IMR-90 (cell line): ENCODE measurements at regions of chr5 and their contacts with region 1.

Region 1: DNA sequence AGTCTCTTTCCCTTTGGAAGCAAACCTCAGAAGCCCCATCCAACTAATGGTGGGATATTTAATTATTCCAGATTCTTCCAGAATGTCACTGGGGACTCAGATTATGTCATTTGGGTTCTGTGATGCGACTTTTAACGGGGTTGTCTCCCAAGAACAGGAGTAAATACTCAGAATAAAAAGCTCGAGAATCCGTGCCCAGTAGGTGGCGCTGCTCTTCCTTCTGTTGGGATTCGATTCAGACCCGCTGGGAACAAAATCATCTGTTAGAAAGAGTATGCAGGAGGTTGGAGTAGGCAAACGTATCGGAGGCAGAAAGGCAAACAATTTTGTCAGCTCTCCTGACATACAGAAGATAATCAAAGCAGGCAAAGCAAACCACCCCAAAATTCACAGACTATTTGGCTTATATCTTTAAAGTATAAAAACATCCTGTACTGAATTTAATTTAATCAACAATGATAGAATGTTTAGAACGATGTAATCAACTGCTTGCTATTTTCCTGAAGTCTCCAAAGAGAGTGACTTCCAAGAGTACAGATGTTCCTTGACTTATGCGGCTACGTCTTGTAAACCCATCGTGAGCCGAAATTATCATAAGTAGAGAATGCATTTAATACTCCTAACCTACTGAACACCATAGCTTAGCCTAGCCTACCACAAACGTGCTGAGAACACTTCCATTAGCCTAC is 169.8 kb upstream of the RAI14 start:
- DNase-seq: peak; percentile 88
- ATAC-seq: peak; percentile 54
- H3K4me3 ChIP-seq: no peak overlapping the region
- H3K27ac ChIP-seq: peak overlapping the region; percentile 70; the same call in 1 of the 2 replicates
- H3K4me1 ChIP-seq: peaks cover 31% of the 10 kb centered on the region
- H3K27me3 ChIP-seq: no peaks in the 10 kb centered on the region
- CTCF ChIP-seq: peak; percentile 90
- POLR2A ChIP-seq: peak; percentile 27; the same call in 1 of the 2 replicates
- RAD21 ChIP-seq: peak; percentile 93

Region 2: DNA sequence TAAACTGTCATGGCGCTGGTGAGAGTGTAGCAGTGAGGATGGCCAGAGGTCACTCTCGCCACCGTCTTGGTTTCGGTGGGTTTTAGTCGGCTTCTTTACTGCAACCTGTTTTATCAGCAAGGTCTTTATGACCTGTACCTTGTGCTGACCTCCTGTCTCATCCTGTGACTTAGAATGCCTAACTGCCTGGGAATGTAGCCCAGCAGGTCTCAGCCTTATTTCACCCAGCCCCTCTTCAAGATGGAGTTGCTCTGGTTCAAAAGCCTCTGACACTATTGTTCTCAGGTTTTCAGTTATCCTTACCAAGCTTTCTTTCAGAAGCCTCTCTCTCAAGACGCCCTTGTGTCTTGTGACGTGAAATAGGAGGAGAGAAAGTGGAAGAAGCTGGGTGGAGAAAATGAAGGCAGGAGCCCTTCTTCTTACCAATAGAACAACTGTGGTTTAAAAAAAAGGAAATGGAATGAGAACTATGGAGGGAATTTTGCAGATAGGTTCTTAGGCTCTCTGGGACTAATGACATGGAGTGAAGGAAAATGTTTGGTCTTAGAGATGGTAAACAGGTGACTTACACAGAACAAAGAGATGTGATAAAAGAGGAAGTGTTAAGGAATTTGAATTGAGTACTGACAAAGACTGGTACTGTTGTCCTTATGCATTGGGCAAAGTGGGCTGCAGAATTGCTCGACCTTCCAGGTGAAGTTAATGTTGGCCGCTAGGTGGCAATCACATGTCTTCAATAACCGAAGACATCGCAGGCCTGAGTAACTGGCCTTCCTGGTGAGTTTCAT is 36.5 kb after region 1 on chr5:
- CTCF ChIA-PET with region 1: interaction called, 7 read pairs
- POLR2A ChIA-PET with region 1: no interaction called
- dilution Hi-C with region 1: no loop called
- in situ Hi-C with region 1: no loop called
- intact Hi-C with region 1: loop called (anchors 1 kb)
- DNase-seq: peak; percentile 92
- ATAC-seq: peak; percentile 84
- H3K4me3 ChIP-seq: no peak overlapping the region
- H3K27ac ChIP-seq: peak overlapping the region; percentile 58; the same call in 1 of the 2 replicates
- H3K4me1 ChIP-seq: peaks cover 14% of the 10 kb centered on the region
- H3K27me3 ChIP-seq: no peaks in the 10 kb centered on the region
- CTCF ChIP-seq: peak; percentile 76
- POLR2A ChIP-seq: 0 out of 2 replicates have a peak, but pooled peaks have one; percentile 29
- RAD21 ChIP-seq: peak; percentile 91

Region 3: GRCh38 chr5:34533582-34534522 is 47.5 kb after region 1 on chr5:
- CTCF ChIA-PET with region 1: interaction called, 3 read pairs
- POLR2A ChIA-PET with region 1: no interaction called
- dilution Hi-C with region 1: no loop called
- in situ Hi-C with region 1: no loop called
- intact Hi-C with region 1: loop called (anchors 1 kb)
- DNase-seq: peak; percentile 97
- ATAC-seq: peak; percentile 61
- H3K4me3 ChIP-seq: no peak overlapping the region
- H3K27ac ChIP-seq: peak overlapping the region; percentile 98
- H3K4me1 ChIP-seq: peaks cover 36% of the 10 kb centered on the region
- H3K27me3 ChIP-seq: no peaks in the 10 kb centered on the region
- CTCF ChIP-seq: no peak
- POLR2A ChIP-seq: no peak
- RAD21 ChIP-seq: no peak

Region 4: DNA sequence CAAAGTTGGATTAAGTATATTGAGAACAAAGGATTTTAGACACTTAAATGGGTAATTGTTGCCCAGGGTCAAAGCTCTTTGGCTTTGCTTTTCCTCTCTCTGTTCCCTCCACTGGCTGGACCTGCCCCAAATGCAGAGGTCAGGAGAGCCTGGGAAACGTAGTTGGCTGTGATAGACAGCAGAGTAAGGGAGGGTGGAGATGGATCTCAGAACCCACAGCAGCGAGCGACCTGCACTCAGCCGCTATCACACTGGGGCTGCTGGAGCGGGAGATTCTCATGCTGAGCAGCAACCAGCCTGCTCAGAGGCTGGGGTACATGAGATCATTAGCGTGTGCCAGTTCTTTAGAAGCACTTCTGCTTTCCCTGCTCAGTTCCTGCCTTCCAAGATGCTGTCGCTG is 280.9 kb after region 1 on chr5:
- CTCF ChIA-PET with region 1: interaction called, 3 read pairs
- POLR2A ChIA-PET with region 1: no interaction called
- dilution Hi-C with region 1: no loop called
- in situ Hi-C with region 1: no loop called
- intact Hi-C with region 1: loop called (anchors 10 kb)
- DNase-seq: no peak
- ATAC-seq: no peak
- H3K4me3 ChIP-seq: no peak overlapping the region
- H3K27ac ChIP-seq: no peak overlapping the region; the same call in 1 of the 2 replicates
- H3K4me1 ChIP-seq: peaks cover 13% of the 10 kb centered on the region
- H3K27me3 ChIP-seq: no peaks in the 10 kb centered on the region
- CTCF ChIP-seq: no peak
- POLR2A ChIP-seq: no peak
- RAD21 ChIP-seq: no peak

Region 5: GRCh38 chr5:34915139-34915855 is 429.0 kb after region 1 on chr5 and contains the starts of genes BRIX1 and RAD1:
- CTCF ChIA-PET with region 1: no interaction called
- POLR2A ChIA-PET with region 1: interaction called, 5 read pairs
- dilution Hi-C with region 1: no loop called
- in situ Hi-C with region 1: no loop called
- intact Hi-C with region 1: loop called (anchors 5 kb)
- DNase-seq: peak; percentile 98
- ATAC-seq: peak; percentile 96
- H3K4me3 ChIP-seq: peak within 1 kb of the TSS; percentile 77
- H3K27ac ChIP-seq: peak within 1 kb of the TSS; percentile 95
- H3K4me1 ChIP-seq: peaks cover 5% of the 10 kb centered on the region; the same call in 1 of the 2 replicates
- H3K27me3 ChIP-seq: no peaks in the 10 kb centered on the region
- CTCF ChIP-seq: no peak; the same call in none of the 2 replicates
- POLR2A ChIP-seq: peak; percentile 62
- RAD21 ChIP-seq: peak; percentile 24; the same call in 1 of the 2 replicates
- total RNA-seq, gene BRIX1: 15.1 and 53.0 TPM in 2 replicates
- total RNA-seq, gene RAD1: 20.8 and 21.5 TPM in 2 replicates